H1 (cell line): ENCODE measurements at regions of chr20 and their contacts with region 1.

Region 1: GRCh38 chr20:10427060-10427692 is 6.8 kb downstream of the MKKS start:
- DNase-seq: no peak
- H3K4me3 ChIP-seq: no peak overlapping the region
- H3K27ac ChIP-seq: no peak overlapping the region
- H3K4me1 ChIP-seq: no peaks in the 10 kb centered on the region
- H3K27me3 ChIP-seq: no peaks in the 10 kb centered on the region
- CTCF ChIP-seq: peak in 2 of 3 experiments; percentile 59 to 68; a peak in 3 of 4 replicates
- EP300 ChIP-seq: no peak
- POLR2A ChIP-seq: no peak
- RAD21 ChIP-seq: peak; percentile 63 to 68

Region 2: GRCh38 chr20:10213526-10213925 is 213.7 kb before region 1 on chr20:
- CTCF ChIA-PET with region 1: interaction called, 12 read pairs
- POLR2A ChIA-PET with region 1: no interaction called
- DNase-seq: no peak
- H3K4me3 ChIP-seq: no peak overlapping the region
- H3K27ac ChIP-seq: no peak overlapping the region
- H3K4me1 ChIP-seq: peaks cover 0 to 7% (median 1%) of the 10 kb centered on the region in 4 experiments; a peak in 2 of 7 replicates
- H3K27me3 ChIP-seq: peaks cover 0 to 5% (median under 1%) of the 10 kb centered on the region in 4 experiments; a peak in 3 of 7 replicates
- CTCF ChIP-seq: no peak
- EP300 ChIP-seq: no peak
- POLR2A ChIP-seq: no peak
- RAD21 ChIP-seq: no peak

Region 3: GRCh38 chr20:10338426-10339180 is 88.6 kb before region 1 on chr20:
- CTCF ChIA-PET with region 1: no interaction called
- POLR2A ChIA-PET with region 1: no interaction called
- DNase-seq: no peak
- H3K4me3 ChIP-seq: no peak overlapping the region
- H3K27ac ChIP-seq: no peak overlapping the region
- H3K4me1 ChIP-seq: no peaks in the 10 kb centered on the region
- H3K27me3 ChIP-seq: no peaks in the 10 kb centered on the region
- CTCF ChIP-seq: no peak
- EP300 ChIP-seq: no peak
- POLR2A ChIP-seq: no peak
- RAD21 ChIP-seq: no peak

Region 4: DNA sequence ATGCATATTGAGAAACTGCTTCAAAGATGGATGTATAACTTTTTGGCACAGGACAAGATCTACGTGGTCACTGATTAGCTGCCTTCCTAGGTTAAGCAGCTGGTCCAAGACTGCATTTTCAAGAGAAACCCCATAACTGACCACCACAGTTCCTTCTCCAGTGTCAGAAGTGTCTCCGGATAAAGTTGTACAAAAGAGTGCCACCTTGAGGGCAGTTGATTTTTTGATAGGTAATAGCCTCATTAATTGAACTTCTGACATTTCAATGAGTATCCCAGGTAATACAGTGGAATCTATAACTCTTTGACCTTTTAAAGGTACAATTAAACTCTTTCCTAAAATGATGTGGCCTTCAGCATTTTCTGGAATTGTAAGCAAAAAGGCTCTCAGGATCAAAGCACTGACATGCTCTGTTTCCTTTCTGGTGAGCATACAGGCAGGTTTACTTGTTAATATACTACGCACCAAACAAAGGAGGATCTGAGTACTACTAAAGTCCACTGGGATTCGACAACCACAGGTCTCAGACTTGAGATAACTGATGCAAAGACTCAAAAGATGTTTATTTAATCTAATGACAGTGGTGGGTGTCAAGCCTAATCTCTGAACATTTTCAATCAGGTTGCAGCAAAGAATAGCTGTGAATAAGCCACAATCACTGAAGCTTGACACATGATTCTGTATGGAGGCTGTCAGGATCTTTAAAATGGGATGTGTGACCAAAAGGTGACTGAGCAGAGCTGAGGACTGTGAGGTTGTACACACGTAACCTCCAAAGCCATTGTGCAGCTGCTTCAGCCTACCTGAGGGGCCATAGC is 14.4 kb before region 1 on chr20:
- CTCF ChIA-PET with region 1: interaction called, 21 read pairs
- POLR2A ChIA-PET with region 1: no interaction called
- DNase-seq: no peak
- H3K4me3 ChIP-seq: no peak overlapping the region
- H3K27ac ChIP-seq: no peak overlapping the region
- H3K4me1 ChIP-seq: no peaks in the 10 kb centered on the region; a peak in 1 of 7 replicates
- H3K27me3 ChIP-seq: no peaks in the 10 kb centered on the region
- CTCF ChIP-seq: peak in 2 of 3 experiments; percentile 2 to 14; a peak in 2 of 4 replicates
- EP300 ChIP-seq: no peak
- POLR2A ChIP-seq: no peak
- RAD21 ChIP-seq: peak; percentile 29 to 40

Region 5: DNA sequence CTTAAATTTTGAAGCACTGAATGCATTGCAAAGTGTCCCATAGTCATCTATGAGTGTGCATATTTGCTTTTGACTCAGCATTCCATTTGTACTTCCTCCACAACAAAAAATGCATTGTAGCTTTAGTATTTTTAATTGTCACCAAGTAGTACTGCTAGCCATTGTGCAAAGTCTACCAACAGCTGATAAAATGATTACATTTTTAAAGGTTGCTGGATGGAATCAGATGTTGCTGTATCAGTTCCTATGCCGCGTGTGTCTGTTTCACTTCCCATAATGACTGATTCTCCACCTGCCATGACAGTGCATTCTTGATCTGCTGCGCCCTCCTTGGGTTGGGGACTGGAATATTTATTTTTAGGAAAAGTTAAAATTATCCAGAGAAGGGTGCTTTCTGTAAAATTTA is 49.1 kb after region 1 on chr20:
- CTCF ChIA-PET with region 1: interaction called, 10 read pairs
- POLR2A ChIA-PET with region 1: no interaction called
- DNase-seq: no peak
- H3K4me3 ChIP-seq: no peak overlapping the region
- H3K27ac ChIP-seq: no peak overlapping the region
- H3K4me1 ChIP-seq: peaks cover 0 to 13% (median 3%) of the 10 kb centered on the region in 4 experiments; a peak in 4 of 7 replicates
- H3K27me3 ChIP-seq: no peaks in the 10 kb centered on the region
- CTCF ChIP-seq: no peak
- EP300 ChIP-seq: no peak
- POLR2A ChIP-seq: no peak
- RAD21 ChIP-seq: no peak; a peak in 1 of 4 replicates